ENCODE measurements at regions of chr16 and their contacts with region 1.

Region 1: GRCh38 chr16:88686439-88687253 is at the start of gene SNAI3:
- DNase-seq: peak; percentile 95
- ATAC-seq: peak; percentile 79
- H3K4me3 Mint-ChIP-seq: peak within 1 kb of the TSS; percentile 86
- H3K27ac Mint-ChIP-seq: peak within 1 kb of the TSS; percentile 73
- H3K4me1 Mint-ChIP-seq: peaks cover 32% of the 10 kb centered on the region
- H3K27me3 Mint-ChIP-seq: peaks cover 1% of the 10 kb centered on the region
- total RNA-seq, gene SNAI3: 14.4 to 15.0 TPM

Region 2: DNA sequence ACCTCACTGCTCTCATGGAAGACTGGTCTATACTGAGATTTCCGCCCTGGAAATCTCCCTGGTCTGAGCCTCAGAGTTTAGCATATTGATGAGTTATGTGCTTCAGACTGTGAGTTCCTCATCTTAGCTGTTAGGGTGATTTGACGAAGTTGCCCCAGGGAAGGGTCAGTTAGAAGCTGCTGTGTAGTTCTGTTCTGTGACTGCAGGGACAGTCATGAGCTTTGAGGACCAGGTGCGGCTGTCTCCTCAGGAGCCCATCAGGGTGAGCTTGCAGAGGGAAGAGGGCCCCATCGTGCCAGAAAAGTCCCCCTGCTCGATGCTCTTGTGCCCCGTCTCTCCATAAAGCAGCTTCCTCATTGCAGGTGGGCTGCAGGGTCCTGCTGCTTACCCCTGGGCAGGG is 76.6 kb before region 1 on chr16:
- POLR2A ChIA-PET with region 1: no interaction called
- DNase-seq: no peak
- ATAC-seq: no peak
- H3K4me3 Mint-ChIP-seq: no peak overlapping the region
- H3K27ac Mint-ChIP-seq: no peak overlapping the region
- H3K4me1 Mint-ChIP-seq: peaks cover 4% of the 10 kb centered on the region
- H3K27me3 Mint-ChIP-seq: no peaks in the 10 kb centered on the region

Region 3: GRCh38 chr16:88672776-88673175 is 13.9 kb before region 1 on chr16:
- POLR2A ChIA-PET with region 1: interaction called, 17 read pairs
- DNase-seq: no peak
- ATAC-seq: no peak
- H3K4me3 Mint-ChIP-seq: no peak overlapping the region
- H3K27ac Mint-ChIP-seq: no peak overlapping the region
- H3K4me1 Mint-ChIP-seq: peaks cover 2% of the 10 kb centered on the region
- H3K27me3 Mint-ChIP-seq: no peaks in the 10 kb centered on the region